ENCODE measurements at regions of chr3 and their contacts with region 1.

Region 1: GRCh38 chr3:46960081-46960701 is 16.4 kb downstream of the CCDC12 start:
- DNase-seq: peak; percentile 38
- H3K4me3 Mint-ChIP-seq: no peak overlapping the region
- H3K27ac Mint-ChIP-seq: peak overlapping the region; percentile 92
- H3K4me1 Mint-ChIP-seq: peaks cover 80% of the 10 kb centered on the region
- H3K27me3 Mint-ChIP-seq: no peaks in the 10 kb centered on the region

Region 2: DNA sequence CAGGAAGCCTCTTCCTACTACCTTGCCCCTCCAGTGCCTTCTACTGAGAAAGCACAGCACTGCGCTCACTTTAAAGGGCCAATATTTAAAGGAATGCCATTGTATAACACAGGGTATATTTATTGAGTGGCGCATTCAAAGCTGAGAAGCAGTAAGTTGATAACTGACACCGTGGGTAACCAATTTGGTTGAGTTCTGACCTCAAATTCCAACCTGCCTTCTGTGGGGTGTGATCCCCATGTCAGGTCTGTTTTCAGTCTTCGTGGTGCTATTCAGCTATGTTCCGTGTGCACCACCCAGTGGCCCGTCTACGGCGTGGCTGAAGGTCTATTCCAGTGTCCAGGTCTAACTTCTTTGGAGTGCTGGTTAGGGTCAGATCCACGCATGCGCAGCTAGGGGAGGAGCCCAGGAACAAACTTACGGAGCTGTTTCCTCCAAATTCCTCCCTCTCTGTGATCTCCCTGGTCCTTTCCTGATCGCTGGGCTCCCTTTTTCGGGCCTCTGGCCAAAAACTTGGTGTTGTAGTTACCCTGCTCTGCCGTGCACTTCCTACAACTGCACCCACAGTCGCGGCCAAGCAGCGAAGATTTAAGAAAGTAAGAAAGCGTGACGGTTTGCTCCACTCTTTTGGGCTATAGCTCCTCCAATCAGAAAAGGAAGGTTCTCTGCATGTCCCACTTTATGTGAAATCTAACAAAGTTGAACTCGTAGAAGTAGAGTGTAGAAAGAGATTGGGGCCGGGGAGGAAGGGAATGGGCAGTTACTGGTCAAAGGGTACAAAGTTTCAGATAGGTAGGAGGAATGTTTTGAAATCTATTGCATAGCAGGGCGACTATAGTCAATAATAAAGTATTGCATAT is 401.8 kb before region 1 on chr3:
- CTCF ChIA-PET with region 1: no interaction called
- POLR2A ChIA-PET with region 1: no interaction called
- intact Hi-C with region 1: no loop called
- DNase-seq: peak; percentile 78
- H3K4me3 Mint-ChIP-seq: peak overlapping the region; percentile 71
- H3K27ac Mint-ChIP-seq: no peak overlapping the region
- H3K4me1 Mint-ChIP-seq: peaks cover 11% of the 10 kb centered on the region
- H3K27me3 Mint-ChIP-seq: peaks cover 1% of the 10 kb centered on the region

Region 3: GRCh38 chr3:46947981-46948791 is 12.0 kb before region 1 on chr3:
- CTCF ChIA-PET with region 1: interaction called, 9 read pairs
- POLR2A ChIA-PET with region 1: interaction called, 29 read pairs
- intact Hi-C with region 1: loop called (anchors 1 kb)
- DNase-seq: peak; percentile 82
- H3K4me3 Mint-ChIP-seq: peak overlapping the region; percentile 62
- H3K27ac Mint-ChIP-seq: peak overlapping the region; percentile 95
- H3K4me1 Mint-ChIP-seq: peaks cover 76% of the 10 kb centered on the region
- H3K27me3 Mint-ChIP-seq: no peaks in the 10 kb centered on the region

Region 4: GRCh38 chr3:47420511-47421484 is 460.6 kb after region 1 on chr3:
- CTCF ChIA-PET with region 1: no interaction called
- POLR2A ChIA-PET with region 1: no interaction called
- intact Hi-C with region 1: no loop called
- DNase-seq: peak; percentile 95
- H3K4me3 Mint-ChIP-seq: peak overlapping the region; percentile 54
- H3K27ac Mint-ChIP-seq: peak overlapping the region; percentile 94
- H3K4me1 Mint-ChIP-seq: peaks cover 12% of the 10 kb centered on the region
- H3K27me3 Mint-ChIP-seq: no peaks in the 10 kb centered on the region